HCT116 (cell line): ENCODE measurements at regions of chr22 and their contacts with region 1.

Region 1: GRCh38 chr22:46798366-46799350 is 36.2 kb downstream of the TBC1D22A start:
- DNase-seq: peak; percentile 29
- ATAC-seq: peak; percentile 93
- H3K4me3 ChIP-seq: no peak overlapping the region
- H3K27ac ChIP-seq: 0 out of 2 replicates have a peak overlapping the region, but pooled peaks have one; percentile 18
- H3K4me1 ChIP-seq: peaks cover 3 to 18% of the 10 kb centered on the region in 2 experiments
- H3K27me3 ChIP-seq: no peaks in the 10 kb centered on the region
- CTCF ChIP-seq: peak; percentile 59 to 95 (median 89); a peak in 5 of 6 replicates
- POLR2A ChIP-seq: no peak
- RAD21 ChIP-seq: peak; percentile 78

Region 2: GRCh38 chr22:46737976-46738646 is 60.5 kb before region 1 on chr22 and contains the start of gene CERK:
- CTCF ChIA-PET with region 1: interaction called, 14 read pairs
- POLR2A ChIA-PET with region 1: interaction called, 3 read pairs
- RAD21 ChIA-PET with region 1: interaction called, 3 to 5 read pairs
- intact Hi-C with region 1: loop called (anchors 2 kb)
- DNase-seq: no peak
- ATAC-seq: peak; percentile 71
- H3K4me3 ChIP-seq: peak within 1 kb of the TSS; percentile 72 to 75
- H3K27ac ChIP-seq: peak within 1 kb of the TSS; percentile 99
- H3K4me1 ChIP-seq: peaks cover 20 to 31% of the 10 kb centered on the region in 2 experiments
- H3K27me3 ChIP-seq: no peaks in the 10 kb centered on the region
- CTCF ChIP-seq: no peak
- POLR2A ChIP-seq: peak; percentile 69
- RAD21 ChIP-seq: no peak
- total RNA-seq, gene CERK: 35.0 TPM

Region 3: DNA sequence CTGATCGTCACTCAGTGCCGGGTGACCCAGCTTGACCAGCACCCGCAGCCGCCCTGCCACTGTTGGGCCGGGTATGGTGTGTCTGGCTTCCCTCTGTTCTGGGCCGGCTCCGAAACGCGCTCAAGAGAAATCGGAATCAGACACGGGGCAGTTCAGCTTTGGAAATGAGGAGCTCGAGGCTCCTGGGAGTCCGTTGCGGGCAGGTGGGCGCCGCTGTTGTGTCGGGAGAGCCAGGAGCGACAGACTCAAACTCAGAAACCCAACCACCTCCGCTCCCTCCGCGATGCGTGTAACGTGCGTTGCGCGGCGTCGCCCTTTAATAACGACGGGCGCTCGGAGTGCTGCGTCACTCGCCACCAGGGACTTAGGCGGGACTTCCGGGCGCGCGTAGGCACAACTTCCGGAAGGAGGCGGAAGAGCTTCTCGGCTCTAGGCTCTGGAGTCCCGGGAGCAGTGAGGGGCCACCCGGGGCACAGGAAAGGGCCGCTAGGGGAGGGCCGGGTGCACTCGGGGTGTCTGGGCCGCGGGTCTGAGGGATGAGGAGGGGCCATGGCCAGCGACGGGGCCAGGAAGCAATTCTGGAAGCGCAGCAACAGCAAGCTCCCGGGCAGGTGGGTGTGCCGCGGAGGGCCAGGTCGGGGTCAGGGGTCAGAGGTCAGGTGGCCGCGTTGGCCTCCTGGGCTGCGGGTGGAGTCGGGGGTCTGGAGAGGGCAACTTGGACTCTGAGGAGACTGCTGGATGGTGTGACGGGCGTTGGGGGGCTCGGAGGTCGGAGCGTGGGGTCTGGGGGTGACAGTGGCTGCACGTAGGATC is 36.2 kb before region 1 on chr22 and contains the start of gene TBC1D22A:
- CTCF ChIA-PET with region 1: interaction called, 15 read pairs
- POLR2A ChIA-PET with region 1: interaction called, 3 read pairs
- RAD21 ChIA-PET with region 1: interaction called in 1 of 2 experiments, 3 read pairs
- intact Hi-C with region 1: no loop called
- DNase-seq: peak; percentile 90
- ATAC-seq: peak; percentile 92
- H3K4me3 ChIP-seq: peak within 1 kb of the TSS; percentile 99 to 100
- H3K27ac ChIP-seq: peak within 1 kb of the TSS; percentile 85
- H3K4me1 ChIP-seq: peaks cover 12 to 32% of the 10 kb centered on the region in 2 experiments
- H3K27me3 ChIP-seq: no peaks in the 10 kb centered on the region
- CTCF ChIP-seq: no peak
- POLR2A ChIP-seq: peak; percentile 97
- RAD21 ChIP-seq: peak; percentile 18; the same call in 1 of the 2 replicates
- total RNA-seq, gene TBC1D22A: 20.9 TPM

Region 4: DNA sequence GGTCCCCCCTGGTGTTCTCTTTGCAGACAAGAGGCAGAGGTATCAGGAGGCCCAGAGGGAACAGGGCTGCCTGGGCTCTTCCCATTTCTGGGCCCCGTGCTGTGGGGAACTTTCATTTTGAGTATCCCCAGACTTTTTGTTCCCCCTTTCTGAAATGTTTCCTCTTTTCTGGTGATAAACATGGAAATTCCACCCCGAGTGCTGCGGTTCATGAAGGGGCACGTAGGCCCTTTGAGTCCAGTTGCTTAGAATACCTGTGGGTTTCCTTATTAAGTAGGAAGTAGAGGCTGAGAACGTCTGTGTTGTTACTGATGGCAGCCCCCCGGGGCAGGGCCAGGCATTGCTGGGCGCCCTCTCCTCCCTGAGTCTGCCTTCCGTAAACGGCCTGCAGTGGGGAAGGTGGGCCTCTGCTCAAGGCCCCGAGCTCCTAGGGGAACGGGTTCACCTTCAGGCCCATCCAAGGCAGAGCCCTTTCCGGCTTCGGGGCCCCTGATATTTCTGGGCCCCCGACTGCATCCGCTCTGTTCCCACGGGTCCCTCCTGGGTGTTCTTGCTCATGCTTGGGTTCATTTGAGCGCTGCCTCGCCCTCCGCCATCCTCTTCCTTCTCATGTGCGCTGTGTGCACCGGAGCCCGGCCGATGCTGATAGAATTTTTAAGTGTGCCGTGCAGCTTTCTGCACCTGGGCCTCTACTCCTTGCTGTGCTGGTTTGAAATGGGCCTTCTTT is 24.2 kb before region 1 on chr22:
- CTCF ChIA-PET with region 1: interaction called, 12 read pairs
- POLR2A ChIA-PET with region 1: no interaction called
- RAD21 ChIA-PET with region 1: interaction called, 3 read pairs
- intact Hi-C with region 1: no loop called
- DNase-seq: no peak
- ATAC-seq: peak; percentile 19
- H3K4me3 ChIP-seq: peak overlapping the region; percentile 8 to 51
- H3K27ac ChIP-seq: peak overlapping the region; percentile 99
- H3K4me1 ChIP-seq: peaks cover 39 to 48% of the 10 kb centered on the region in 2 experiments
- H3K27me3 ChIP-seq: no peaks in the 10 kb centered on the region
- CTCF ChIP-seq: no peak
- POLR2A ChIP-seq: no peak
- RAD21 ChIP-seq: no peak

Region 5: GRCh38 chr22:47837703-47838102 is 1039.0 kb after region 1 on chr22:
- CTCF ChIA-PET with region 1: no interaction called
- POLR2A ChIA-PET with region 1: no interaction called
- RAD21 ChIA-PET with region 1: no interaction called
- intact Hi-C with region 1: loop called (anchors 10 kb)
- DNase-seq: peak; percentile 13
- ATAC-seq: peak; percentile 53; the same call in 1 of the 2 replicates
- H3K4me3 ChIP-seq: no peak overlapping the region
- H3K27ac ChIP-seq: no peak overlapping the region
- H3K4me1 ChIP-seq: no peaks in the 10 kb centered on the region
- H3K27me3 ChIP-seq: no peaks in the 10 kb centered on the region
- CTCF ChIP-seq: peak; percentile 28 to 63 (median 58); a peak in 5 of 6 replicates
- POLR2A ChIP-seq: no peak
- RAD21 ChIP-seq: peak; percentile 56